ENCODE measurements at regions of chr16 and their contacts with region 1.

Region 1: GRCh38 chr16:79713609-79714309 is 113.2 kb upstream of the MAF start:
- DNase-seq: no peak
- H3K4me3 Mint-ChIP-seq: no peak overlapping the region
- H3K27ac Mint-ChIP-seq: no peak overlapping the region
- H3K4me1 Mint-ChIP-seq: no peaks in the 10 kb centered on the region
- H3K27me3 Mint-ChIP-seq: no peaks in the 10 kb centered on the region
- CTCF ChIP-seq: no peak

Region 2: GRCh38 chr16:80938035-80938865 is 1224.5 kb after region 1 on chr16:
- CTCF ChIA-PET with region 1: interaction called, 10 read pairs
- intact Hi-C with region 1: no loop called
- DNase-seq: no peak
- H3K4me3 Mint-ChIP-seq: no peak overlapping the region
- H3K27ac Mint-ChIP-seq: no peak overlapping the region
- H3K4me1 Mint-ChIP-seq: no peaks in the 10 kb centered on the region
- H3K27me3 Mint-ChIP-seq: peaks cover 36% of the 10 kb centered on the region
- CTCF ChIP-seq: no peak

Measured in Calu3 (cell line).